Activated CD4-positive, alpha-beta T cell treated with anti-CD3 and anti-CD28 coated beads, Interleukin-2, amount 10 ng/mL, durations not matched to agents 24 days and 14 days (primary cell): ENCODE measurements at regions of chr15 and their contacts with region 1.

Region 1: GRCh38 chr15:100349696-100350433 is 8.1 kb upstream of the ADAMTS17 start:
- DNase-seq: peak; percentile 97
- H3K4me3 Mint-ChIP-seq: peak overlapping the region; percentile 93
- H3K27ac Mint-ChIP-seq: peak overlapping the region; percentile 84
- H3K4me1 Mint-ChIP-seq: peaks cover 9% of the 10 kb centered on the region
- H3K27me3 Mint-ChIP-seq: peaks cover 20% of the 10 kb centered on the region

Region 2: DNA sequence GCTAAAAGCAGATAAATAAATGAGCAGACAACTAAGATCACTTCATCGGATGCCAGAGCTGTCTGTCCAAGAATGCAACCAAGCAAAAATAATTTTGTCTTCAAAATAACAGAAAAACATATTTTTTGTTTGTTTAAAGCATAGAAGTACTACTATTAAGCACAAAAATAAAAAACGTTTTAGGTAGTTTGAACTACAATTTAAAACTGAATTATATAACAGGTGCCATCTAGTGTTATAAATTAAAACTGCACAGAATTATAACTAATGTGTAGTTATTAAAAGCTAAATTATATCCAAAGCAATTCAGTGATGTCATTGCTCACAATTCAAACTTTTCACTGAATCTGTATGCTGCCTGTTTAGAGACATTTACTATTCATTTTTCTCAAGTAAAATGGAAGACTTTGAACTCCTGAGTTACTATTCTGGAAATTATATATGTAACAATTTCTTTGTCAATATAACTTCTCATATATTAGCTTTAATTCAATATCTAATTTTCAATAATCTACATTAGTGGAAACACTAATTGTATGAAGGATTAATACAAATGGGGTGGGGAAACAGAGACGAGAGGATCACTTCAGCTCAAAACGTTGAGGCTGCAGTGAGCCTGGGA is 222.6 kb after region 1 on chr15:
- intact Hi-C with region 1: loop called (anchors 2 kb)
- DNase-seq: no peak
- H3K4me3 Mint-ChIP-seq: peak overlapping the region; percentile 78
- H3K27ac Mint-ChIP-seq: no peak overlapping the region
- H3K4me1 Mint-ChIP-seq: peaks cover 49% of the 10 kb centered on the region
- H3K27me3 Mint-ChIP-seq: no peaks in the 10 kb centered on the region